ENCODE measurements at regions of chr2 and their contacts with region 1.

Region 1: GRCh38 chr2:7225848-7226247 is 308.6 kb downstream of the RNF144A start:
- DNase-seq: no peak
- H3K4me3 ChIP-seq: no peak overlapping the region
- H3K27ac ChIP-seq: no peak overlapping the region
- H3K4me1 ChIP-seq: no peaks in the 10 kb centered on the region
- H3K27me3 ChIP-seq: no peaks in the 10 kb centered on the region
- CTCF ChIP-seq: no peak
- POLR2A ChIP-seq: no peak

Region 2: DNA sequence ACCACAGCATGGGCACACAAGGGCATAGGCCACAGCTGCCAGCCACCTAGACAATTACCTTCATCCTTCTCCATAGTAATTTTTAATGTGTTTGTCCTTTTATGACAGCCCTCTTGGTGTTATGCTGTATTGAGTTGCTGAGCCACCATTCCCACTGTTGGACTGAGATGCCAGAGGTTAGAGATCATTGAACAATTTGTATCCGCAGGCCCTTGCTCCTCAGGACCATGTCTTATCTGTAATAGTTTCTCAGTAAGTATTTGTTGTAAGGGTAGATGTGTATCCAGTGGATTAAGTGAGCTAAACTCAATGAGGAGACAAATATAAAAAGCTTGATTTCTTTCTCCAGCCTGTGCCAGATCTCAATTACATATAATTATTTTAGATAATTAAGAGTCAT is 623.2 kb after region 1 on chr2:
- intact Hi-C with region 1: no loop called
- DNase-seq: no peak
- H3K4me3 ChIP-seq: no peak overlapping the region
- H3K27ac ChIP-seq: no peak overlapping the region
- H3K4me1 ChIP-seq: no peaks in the 10 kb centered on the region
- H3K27me3 ChIP-seq: no peaks in the 10 kb centered on the region
- CTCF ChIP-seq: no peak
- POLR2A ChIP-seq: no peak

Region 3: DNA sequence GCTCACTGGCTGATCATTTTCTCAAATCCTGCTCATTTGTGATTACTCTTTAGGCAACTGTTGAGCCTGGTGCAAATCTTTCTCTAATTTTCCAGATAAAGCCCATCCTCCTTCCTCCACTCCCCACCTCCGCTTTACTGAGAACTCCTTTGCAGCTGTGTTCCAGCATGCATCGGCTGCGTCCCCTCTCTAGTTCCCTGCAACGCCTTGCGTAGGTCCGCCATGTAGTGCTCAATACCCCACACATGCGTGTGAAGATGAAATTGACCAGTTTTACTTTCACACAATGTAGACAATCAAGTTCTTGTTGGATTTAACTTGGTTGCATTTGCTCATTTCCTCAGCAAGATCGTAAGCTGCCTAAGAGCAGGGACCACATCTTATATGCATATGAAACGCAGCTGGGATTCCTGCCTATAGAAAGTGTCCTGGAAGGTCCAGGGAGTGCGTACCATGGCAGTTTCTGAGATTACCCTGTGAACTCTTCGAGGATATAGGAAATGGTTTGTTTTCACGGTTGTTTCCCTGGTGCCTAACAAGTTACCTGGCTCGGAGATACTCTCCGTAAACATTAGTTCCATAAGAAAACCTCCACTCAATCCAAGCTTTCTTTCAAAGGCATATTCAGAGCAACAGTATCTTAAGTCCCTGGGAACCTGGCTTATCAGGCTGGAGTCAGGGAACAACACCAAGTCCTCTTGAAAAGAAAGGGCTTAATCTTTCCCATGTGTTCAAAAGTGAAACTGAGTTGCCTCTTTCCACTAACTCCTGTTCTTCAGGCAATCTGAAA is 689.6 kb after region 1 on chr2:
- intact Hi-C with region 1: loop called (anchors 5 kb)
- DNase-seq: no peak
- H3K4me3 ChIP-seq: peak overlapping the region; percentile 26 to 53 (median 27)
- H3K27ac ChIP-seq: peak overlapping the region in 1 of 2 donors; percentile 73
- H3K4me1 ChIP-seq: no peaks in the 10 kb centered on the region
- H3K27me3 ChIP-seq: no peaks in the 10 kb centered on the region
- CTCF ChIP-seq: no peak
- POLR2A ChIP-seq: no peak